CD8-positive, alpha-beta T cell (primary cell): ENCODE measurements at regions of chr7 and their contacts with region 1.

Region 1: GRCh38 chr7:155750300-155750699 is 62.0 kb downstream of the SHH start:
- DNase-seq: no peak
- ATAC-seq: no peak
- H3K4me3 ChIP-seq: no peak overlapping the region
- H3K4me3 Mint-ChIP-seq: no peak overlapping the region
- H3K27ac ChIP-seq: no peak overlapping the region
- H3K27ac Mint-ChIP-seq: no peak overlapping the region
- H3K4me1 ChIP-seq: peaks cover 32% of the 10 kb centered on the region
- H3K4me1 Mint-ChIP-seq: peaks cover 88% of the 10 kb centered on the region
- H3K27me3 ChIP-seq: no peaks in the 10 kb centered on the region
- H3K27me3 Mint-ChIP-seq: no peaks in the 10 kb centered on the region
- CTCF ChIP-seq: no peak

Region 2: GRCh38 chr7:155763691-155764437 is 13.6 kb after region 1 on chr7:
- CTCF ChIA-PET with region 1: interaction called, 6 read pairs
- POLR2A ChIA-PET with region 1: interaction called, 3 read pairs
- intact Hi-C with region 1: loop called in 1 of 2 experiments (anchors 2 kb)
- DNase-seq: peak in 8 of 9 experiments; percentile 23 to 80 (median 60)
- ATAC-seq: peak; percentile 80
- H3K4me3 ChIP-seq: peak overlapping the region in 1 of 2 experiments; percentile 28
- H3K4me3 Mint-ChIP-seq: peak overlapping the region; percentile 78
- H3K27ac ChIP-seq: peak overlapping the region; percentile 26 to 86
- H3K27ac Mint-ChIP-seq: peak overlapping the region; percentile 91
- H3K4me1 ChIP-seq: peaks cover 31% of the 10 kb centered on the region
- H3K4me1 Mint-ChIP-seq: peaks cover 54% of the 10 kb centered on the region
- H3K27me3 ChIP-seq: no peaks in the 10 kb centered on the region
- H3K27me3 Mint-ChIP-seq: no peaks in the 10 kb centered on the region
- CTCF ChIP-seq: no peak

Region 3: DNA sequence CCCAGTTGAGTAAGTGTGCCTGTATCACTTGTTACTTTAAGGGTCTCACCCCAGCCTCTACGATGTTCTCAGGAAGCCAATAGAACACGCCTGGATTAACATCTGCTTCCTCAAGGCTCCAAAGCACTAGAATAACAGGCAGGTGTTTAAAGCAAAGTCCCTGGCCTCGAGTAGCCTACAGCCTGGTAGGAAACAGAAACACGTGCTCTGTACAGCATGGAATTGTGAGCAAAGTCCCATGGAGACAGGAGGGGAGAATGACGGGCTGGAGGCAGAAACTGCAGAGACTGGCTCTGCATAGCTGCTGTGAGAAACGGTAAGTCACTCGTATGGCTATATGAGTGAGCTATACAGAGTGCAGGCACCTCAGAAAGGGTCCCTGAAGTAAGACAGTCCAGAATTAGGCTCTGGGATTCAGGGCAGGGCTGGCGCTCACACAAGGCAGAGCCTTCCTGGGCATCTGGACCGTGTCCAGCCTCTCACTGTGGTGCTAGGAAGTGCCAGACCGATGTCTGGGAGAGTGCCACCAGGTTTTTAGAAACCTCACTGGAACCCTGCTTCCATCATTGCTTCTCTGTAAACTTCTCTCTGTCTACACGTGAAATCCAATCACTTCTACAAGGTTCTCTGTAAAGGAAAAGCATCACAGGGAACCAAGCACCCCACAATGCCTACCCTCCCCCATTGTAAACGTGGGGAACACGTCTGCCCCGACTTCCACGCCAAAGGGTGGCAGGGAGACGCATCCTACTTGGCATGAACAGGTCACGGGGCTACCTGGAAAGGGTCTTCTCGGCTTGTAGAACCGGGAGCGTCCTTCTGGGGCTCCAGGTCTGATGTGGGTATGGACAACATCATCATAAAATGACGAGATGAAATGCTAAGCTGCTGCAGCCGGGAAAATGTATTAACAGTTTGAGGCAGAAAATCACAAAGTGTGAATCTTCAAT is 100.7 kb after region 1 on chr7:
- CTCF ChIA-PET with region 1: no interaction called
- POLR2A ChIA-PET with region 1: no interaction called
- intact Hi-C with region 1: no loop called
- DNase-seq: no peak
- ATAC-seq: no peak
- H3K4me3 ChIP-seq: no peak overlapping the region
- H3K4me3 Mint-ChIP-seq: no peak overlapping the region
- H3K27ac ChIP-seq: no peak overlapping the region
- H3K27ac Mint-ChIP-seq: no peak overlapping the region
- H3K4me1 ChIP-seq: no peaks in the 10 kb centered on the region
- H3K4me1 Mint-ChIP-seq: no peaks in the 10 kb centered on the region
- H3K27me3 ChIP-seq: no peaks in the 10 kb centered on the region
- H3K27me3 Mint-ChIP-seq: peaks cover 11% of the 10 kb centered on the region
- CTCF ChIP-seq: no peak